ENCODE measurements at regions of chr13 and their contacts with region 1.

Region 1: GRCh38 chr13:46345398-46345797 is 41.7 kb downstream of the RUBCNL start:
- DNase-seq: no peak
- H3K4me3 Mint-ChIP-seq: no peak overlapping the region
- H3K27ac Mint-ChIP-seq: no peak overlapping the region
- H3K4me1 Mint-ChIP-seq: peaks cover 13% of the 10 kb centered on the region
- H3K27me3 Mint-ChIP-seq: no peaks in the 10 kb centered on the region

Region 2: DNA sequence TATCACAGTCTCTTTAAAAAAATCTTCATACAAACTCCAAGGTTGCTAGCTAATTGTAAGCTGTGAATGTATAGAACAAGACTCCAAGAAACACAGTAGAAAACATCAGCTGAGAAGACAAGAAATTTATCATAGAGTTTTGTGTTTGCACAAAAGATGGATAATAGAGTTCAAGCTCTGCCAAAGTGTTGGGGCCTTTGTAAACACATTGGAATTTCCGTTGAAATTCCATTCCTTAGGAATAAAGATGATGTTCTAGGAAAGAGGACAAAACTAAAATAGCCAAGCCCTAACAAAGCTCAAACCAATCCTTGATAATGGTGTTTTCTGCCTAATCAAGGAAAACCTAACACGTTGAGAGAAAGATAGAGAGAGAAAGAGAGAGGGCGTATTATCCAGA is 113.1 kb before region 1 on chr13:
- CTCF ChIA-PET with region 1: no interaction called
- POLR2A ChIA-PET with region 1: no interaction called
- DNase-seq: no peak
- H3K4me3 Mint-ChIP-seq: no peak overlapping the region
- H3K27ac Mint-ChIP-seq: no peak overlapping the region
- H3K4me1 Mint-ChIP-seq: no peaks in the 10 kb centered on the region
- H3K27me3 Mint-ChIP-seq: no peaks in the 10 kb centered on the region

Region 3: DNA sequence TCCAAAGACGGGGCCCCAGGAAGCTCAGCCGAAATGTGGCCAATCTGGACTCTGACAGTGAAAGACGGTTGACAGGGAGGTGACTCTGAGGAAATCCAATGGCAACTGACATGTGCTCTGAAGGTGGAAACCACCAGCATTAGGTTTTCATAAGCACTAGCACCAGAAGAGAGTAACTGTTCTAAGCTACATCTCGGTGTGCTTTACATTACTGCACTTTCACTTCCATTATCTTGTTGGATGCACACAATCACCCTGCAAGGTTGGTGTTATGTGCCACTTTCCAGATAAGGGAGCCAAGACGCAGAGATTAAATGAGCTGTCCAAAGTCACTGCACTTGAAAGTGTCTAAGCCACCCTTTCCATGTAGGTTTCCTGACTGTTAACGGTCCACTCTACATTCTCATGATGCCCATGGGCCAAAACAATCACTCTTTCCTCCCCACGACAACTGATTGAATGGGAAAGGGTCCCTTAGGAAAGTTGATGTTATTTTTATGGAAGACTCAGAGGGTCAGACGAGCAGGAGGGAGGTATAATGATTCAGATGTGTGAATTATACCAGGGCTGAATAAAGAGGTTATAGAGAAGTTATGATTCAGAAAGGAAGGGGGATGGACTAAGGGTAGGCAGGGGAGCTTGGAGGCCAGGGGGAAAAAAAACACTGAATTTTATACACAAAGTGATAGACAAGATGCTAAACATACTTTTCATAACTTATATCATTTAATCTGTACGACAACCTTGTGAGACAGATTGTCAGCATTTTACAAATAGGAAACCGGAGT is 11.2 kb before region 1 on chr13:
- CTCF ChIA-PET with region 1: interaction called, 13 read pairs
- POLR2A ChIA-PET with region 1: no interaction called
- DNase-seq: no peak
- H3K4me3 Mint-ChIP-seq: no peak overlapping the region
- H3K27ac Mint-ChIP-seq: no peak overlapping the region
- H3K4me1 Mint-ChIP-seq: peaks cover 39% of the 10 kb centered on the region
- H3K27me3 Mint-ChIP-seq: no peaks in the 10 kb centered on the region

Region 4: GRCh38 chr13:46463719-46464118 is 118.3 kb after region 1 on chr13:
- CTCF ChIA-PET with region 1: no interaction called
- POLR2A ChIA-PET with region 1: no interaction called
- DNase-seq: no peak
- H3K4me3 Mint-ChIP-seq: no peak overlapping the region
- H3K27ac Mint-ChIP-seq: no peak overlapping the region
- H3K4me1 Mint-ChIP-seq: no peaks in the 10 kb centered on the region
- H3K27me3 Mint-ChIP-seq: no peaks in the 10 kb centered on the region

Region 5: DNA sequence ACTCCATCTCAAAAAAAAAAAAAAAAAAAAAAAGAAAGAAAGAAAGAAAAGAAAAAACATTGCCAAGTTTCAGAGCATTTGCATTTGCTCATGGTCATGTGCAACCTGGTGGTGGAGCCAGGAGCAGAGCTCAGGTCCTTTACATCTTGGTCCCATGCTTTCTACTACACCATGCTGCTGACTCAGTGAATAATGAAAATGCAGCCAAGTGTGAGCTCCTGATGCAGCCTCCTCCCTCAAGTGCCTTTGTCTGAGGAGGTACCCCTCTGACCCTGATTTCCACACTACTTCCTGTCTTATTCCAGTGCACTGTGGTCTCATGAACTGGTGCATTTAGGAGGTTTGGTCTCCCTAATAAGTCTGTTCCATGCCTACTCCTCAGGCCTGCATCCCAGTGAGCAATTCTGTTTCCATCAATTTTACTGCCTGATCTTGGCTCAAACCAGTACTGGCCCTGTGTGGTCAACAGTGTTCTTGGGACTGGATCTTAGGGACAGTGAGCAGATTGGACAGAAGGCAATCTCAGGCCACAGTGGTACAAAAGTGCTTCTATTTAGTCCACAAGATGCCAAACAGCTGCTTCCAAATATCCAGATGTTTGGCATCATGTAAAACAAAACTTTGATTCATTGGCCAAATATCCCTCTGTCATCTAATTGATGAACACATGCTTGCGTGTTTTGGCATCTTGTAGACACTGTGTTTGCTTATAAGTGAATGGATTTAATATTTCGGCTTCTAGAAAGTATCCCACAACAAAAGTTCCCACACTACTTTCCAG is 178.8 kb after region 1 on chr13:
- CTCF ChIA-PET with region 1: no interaction called
- POLR2A ChIA-PET with region 1: no interaction called
- DNase-seq: no peak
- H3K4me3 Mint-ChIP-seq: no peak overlapping the region
- H3K27ac Mint-ChIP-seq: no peak overlapping the region
- H3K4me1 Mint-ChIP-seq: no peaks in the 10 kb centered on the region
- H3K27me3 Mint-ChIP-seq: peaks cover 10% of the 10 kb centered on the region